CD14-positive monocyte (primary cell): ENCODE measurements at regions of chrX and their contacts with region 1.

Region 1: DNA sequence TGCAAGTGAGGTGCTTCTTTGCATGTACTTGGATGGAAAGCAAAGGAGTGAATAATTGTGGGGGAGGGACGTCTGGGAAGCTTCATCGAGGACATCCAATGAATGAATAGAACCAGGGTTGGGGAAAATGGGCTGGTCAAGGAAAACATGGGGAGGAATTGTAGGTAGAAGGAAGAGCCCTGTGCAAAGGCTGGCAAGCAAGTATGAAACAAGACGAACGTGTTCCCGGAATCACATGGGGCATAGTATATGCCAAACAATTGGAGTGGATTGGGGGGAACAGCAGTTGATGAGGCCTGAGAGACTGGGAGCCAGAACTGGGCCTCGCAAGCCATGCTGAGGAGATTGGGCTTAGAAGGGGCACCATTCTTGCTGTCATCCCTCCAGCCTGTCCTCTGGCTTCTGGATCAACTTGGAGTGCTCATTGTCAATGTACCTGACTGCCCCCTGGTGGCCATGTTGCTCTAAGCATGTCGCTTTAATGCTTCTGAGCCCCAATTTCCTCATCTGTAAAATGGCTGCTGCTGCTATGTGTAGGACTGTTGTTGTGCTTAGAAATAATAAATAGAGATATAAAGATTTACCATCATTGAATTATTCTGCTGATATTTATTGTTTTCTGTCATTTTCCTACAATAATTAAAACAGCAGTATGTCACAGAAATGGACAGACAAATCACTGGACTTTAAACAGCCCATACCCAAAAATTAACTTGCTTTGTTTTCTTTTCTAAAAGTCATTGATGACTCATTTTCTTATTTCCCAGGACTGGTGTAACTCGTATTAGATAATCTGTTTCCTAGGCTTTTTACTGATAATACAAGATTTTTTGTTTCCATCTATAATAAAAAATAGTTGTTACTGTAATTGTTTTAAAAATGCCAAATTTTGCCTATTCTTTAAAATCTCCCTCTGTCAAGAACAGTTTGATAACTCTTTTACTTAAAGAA is 66.4 kb downstream of the JADE3 start:
- DNase-seq: peak; percentile 51 to 71 (median 68)
- H3K4me3 ChIP-seq: no peak overlapping the region
- H3K4me3 Mint-ChIP-seq: no peak overlapping the region
- H3K27ac ChIP-seq: no peak overlapping the region
- H3K27ac Mint-ChIP-seq: no peak overlapping the region
- H3K4me1 ChIP-seq: no peaks in the 10 kb centered on the region
- H3K4me1 Mint-ChIP-seq: no peaks in the 10 kb centered on the region
- H3K27me3 ChIP-seq: peaks cover 0 to 4% of the 10 kb centered on the region in 2 donors
- H3K27me3 Mint-ChIP-seq: peaks cover 0 to 14% (median 0%) of the 10 kb centered on the region in 3 donors
- CTCF ChIP-seq: peak; percentile 64

Region 2: GRCh38 chrX:46140272-46140671 is 838.3 kb before region 1 on chrX:
- intact Hi-C with region 1: no loop called
- DNase-seq: no peak
- H3K4me3 ChIP-seq: no peak overlapping the region
- H3K4me3 Mint-ChIP-seq: no peak overlapping the region
- H3K27ac ChIP-seq: no peak overlapping the region
- H3K27ac Mint-ChIP-seq: no peak overlapping the region
- H3K4me1 ChIP-seq: no peaks in the 10 kb centered on the region
- H3K4me1 Mint-ChIP-seq: no peaks in the 10 kb centered on the region
- H3K27me3 ChIP-seq: peaks cover 0 to 2% of the 10 kb centered on the region in 2 donors
- H3K27me3 Mint-ChIP-seq: no peaks in the 10 kb centered on the region
- CTCF ChIP-seq: no peak

Region 3: GRCh38 chrX:46903458-46904242 is 75.0 kb before region 1 on chrX:
- intact Hi-C with region 1: loop called in 1 of 2 experiments (anchors 10 kb)
- DNase-seq: peak; percentile 25 to 47 (median 36)
- H3K4me3 ChIP-seq: peak overlapping the region in 2 of 3 experiments; percentile 32 to 67
- H3K4me3 Mint-ChIP-seq: peak overlapping the region; percentile 77 to 82
- H3K27ac ChIP-seq: no peak overlapping the region
- H3K27ac Mint-ChIP-seq: no peak overlapping the region
- H3K4me1 ChIP-seq: no peaks in the 10 kb centered on the region
- H3K4me1 Mint-ChIP-seq: peaks cover 3% of the 10 kb centered on the region
- H3K27me3 ChIP-seq: peaks cover 0 to 2% of the 10 kb centered on the region in 2 donors
- H3K27me3 Mint-ChIP-seq: peaks cover 0 to 18% (median 0%) of the 10 kb centered on the region in 3 donors
- CTCF ChIP-seq: peak; percentile 40